Activated CD4-positive, alpha-beta memory T cell treated with anti-CD3 and anti-CD28 coated beads for 36 hours (primary cell): ENCODE measurements at regions of chr20 and their contacts with region 1.

Region 1: GRCh38 chr20:17536944-17537444 is 5.8 kb upstream of the BFSP1 start:
- DNase-seq: peak; percentile 78
- H3K4me3 Mint-ChIP-seq: no peak overlapping the region
- H3K27ac Mint-ChIP-seq: peak overlapping the region; percentile 28
- H3K4me1 Mint-ChIP-seq: peaks cover 16% of the 10 kb centered on the region
- H3K27me3 Mint-ChIP-seq: peaks cover 9% of the 10 kb centered on the region

Region 2: DNA sequence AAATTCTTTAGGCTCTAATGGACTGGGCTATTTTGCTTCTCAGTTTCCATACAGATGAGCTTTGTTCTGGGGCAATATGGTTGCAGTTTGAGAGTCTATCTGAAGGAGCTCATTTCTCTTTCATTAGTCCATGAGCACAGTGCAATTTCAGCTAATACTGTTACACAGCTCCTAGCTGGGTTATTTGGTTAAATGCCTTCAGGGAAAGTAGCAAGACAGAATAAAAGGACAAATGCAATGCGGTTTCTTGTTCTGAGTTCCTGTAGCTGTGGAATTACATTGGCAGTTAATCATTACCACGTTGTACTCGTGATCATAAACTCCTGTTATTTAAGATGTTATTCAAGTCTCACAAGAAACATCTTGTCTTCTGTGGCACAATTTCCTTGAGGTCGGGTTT is 133.5 kb before region 1 on chr20:
- CTCF ChIA-PET with region 1: no interaction called
- POLR2A ChIA-PET with region 1: no interaction called
- intact Hi-C with region 1: no loop called
- DNase-seq: no peak
- H3K4me3 Mint-ChIP-seq: no peak overlapping the region
- H3K27ac Mint-ChIP-seq: no peak overlapping the region
- H3K4me1 Mint-ChIP-seq: no peaks in the 10 kb centered on the region
- H3K27me3 Mint-ChIP-seq: peaks cover 3% of the 10 kb centered on the region

Region 3: DNA sequence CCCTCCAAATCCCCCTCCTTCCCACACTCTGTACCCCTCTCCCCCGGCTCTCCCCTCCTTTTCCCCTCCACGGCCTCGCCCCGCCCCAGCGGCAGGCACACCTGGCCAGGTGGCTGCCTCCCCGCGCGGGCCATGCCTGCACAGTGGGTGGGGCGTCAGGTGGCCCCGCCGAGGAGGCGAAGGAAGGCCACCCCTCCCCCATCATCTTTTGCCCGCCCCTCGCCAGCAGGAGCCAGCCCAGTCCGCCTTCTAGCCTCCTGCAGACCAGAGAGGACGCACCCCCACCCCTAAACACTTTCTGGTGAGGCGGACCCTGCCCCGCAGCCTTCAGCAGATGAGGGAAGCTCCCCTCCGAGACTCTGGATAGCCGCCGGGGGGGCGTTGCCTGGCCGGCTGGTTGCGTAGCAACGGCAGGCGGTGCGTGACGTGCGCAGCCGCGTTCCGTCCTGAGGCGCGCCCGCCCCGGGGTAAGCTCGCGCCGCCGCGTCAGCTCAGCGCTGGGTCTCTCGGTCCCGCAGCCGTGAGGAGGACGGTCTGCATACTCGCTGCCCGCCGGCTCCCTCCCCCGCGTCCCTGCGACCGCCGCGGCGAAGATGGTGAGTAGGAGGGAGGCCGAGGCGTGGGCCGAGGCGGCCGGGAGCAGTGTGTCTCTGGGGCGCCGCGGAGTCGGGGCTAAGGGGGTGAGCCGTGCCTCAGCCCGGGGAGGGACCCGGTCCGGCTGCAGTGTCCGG is 32.8 kb after region 1 on chr20 and contains the start of gene DSTN:
- CTCF ChIA-PET with region 1: interaction called, 20 read pairs
- POLR2A ChIA-PET with region 1: no interaction called
- intact Hi-C with region 1: loop called (anchors 1 kb)
- DNase-seq: peak; percentile 90
- H3K4me3 Mint-ChIP-seq: peak within 1 kb of the TSS; percentile 90
- H3K27ac Mint-ChIP-seq: peak within 1 kb of the TSS; percentile 79
- H3K4me1 Mint-ChIP-seq: peaks cover 27% of the 10 kb centered on the region
- H3K27me3 Mint-ChIP-seq: no peaks in the 10 kb centered on the region
- total RNA-seq, gene DSTN: 91.2 to 94.3 TPM

Region 4: DNA sequence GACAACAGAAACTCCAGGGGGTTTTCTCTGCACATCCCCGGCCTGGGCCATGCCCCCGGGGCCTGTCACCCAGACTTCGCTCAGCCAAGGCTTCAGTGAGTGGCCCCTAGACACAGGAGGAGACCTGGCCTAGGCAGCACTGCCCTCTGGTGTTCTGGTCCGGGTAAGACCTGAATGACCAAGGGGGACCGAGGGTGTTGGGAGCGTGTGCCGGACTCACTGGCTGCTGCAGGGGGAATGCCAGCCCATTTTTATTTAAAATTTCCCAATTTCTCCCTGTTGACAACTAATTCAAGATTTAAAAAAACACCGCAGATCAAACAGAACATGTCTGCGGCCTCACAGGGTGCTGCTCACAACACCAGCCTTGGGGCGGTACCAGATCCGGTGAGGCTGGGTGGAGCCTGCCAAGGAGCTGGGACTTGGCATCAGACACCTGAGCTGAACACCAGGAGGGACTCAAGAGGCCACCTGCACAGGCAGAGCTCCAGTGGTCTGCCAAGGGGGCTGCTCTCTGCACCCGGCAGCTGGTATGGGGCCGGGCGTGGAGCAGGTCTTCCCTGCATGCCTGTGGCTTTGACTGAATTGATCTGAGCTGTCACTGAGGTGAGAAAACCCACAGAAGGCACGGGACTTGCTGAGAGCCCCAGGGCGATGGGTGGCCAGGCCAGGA is 80.7 kb after region 1 on chr20:
- CTCF ChIA-PET with region 1: interaction called, 20 read pairs
- POLR2A ChIA-PET with region 1: no interaction called
- intact Hi-C with region 1: loop called (anchors 1 kb)
- DNase-seq: peak; percentile 63
- H3K4me3 Mint-ChIP-seq: no peak overlapping the region
- H3K27ac Mint-ChIP-seq: no peak overlapping the region
- H3K4me1 Mint-ChIP-seq: peaks cover 3% of the 10 kb centered on the region
- H3K27me3 Mint-ChIP-seq: no peaks in the 10 kb centered on the region

Region 5: GRCh38 chr20:17898548-17898994 is 361.6 kb after region 1 on chr20:
- CTCF ChIA-PET with region 1: interaction called, 14 read pairs
- POLR2A ChIA-PET with region 1: no interaction called
- intact Hi-C with region 1: loop called (anchors 2 kb)
- DNase-seq: peak; percentile 73
- H3K4me3 Mint-ChIP-seq: no peak overlapping the region
- H3K27ac Mint-ChIP-seq: no peak overlapping the region
- H3K4me1 Mint-ChIP-seq: peaks cover 16% of the 10 kb centered on the region
- H3K27me3 Mint-ChIP-seq: peaks cover 23% of the 10 kb centered on the region

Region 6: GRCh38 chr20:18137412-18138265 is 600.6 kb after region 1 on chr20 and contains the starts of genes KAT14 and PET117:
- CTCF ChIA-PET with region 1: no interaction called
- POLR2A ChIA-PET with region 1: no interaction called
- intact Hi-C with region 1: loop called (anchors 10 kb)
- DNase-seq: peak; percentile 93
- H3K4me3 Mint-ChIP-seq: peak within 1 kb of the TSS; percentile 65
- H3K27ac Mint-ChIP-seq: peak within 1 kb of the TSS; percentile 76
- H3K4me1 Mint-ChIP-seq: peaks cover 29% of the 10 kb centered on the region
- H3K27me3 Mint-ChIP-seq: no peaks in the 10 kb centered on the region
- total RNA-seq, gene KAT14: 14.2 to 14.4 TPM
- total RNA-seq, gene PET117: 15.2 to 15.9 TPM